HEK293T (cell line): ENCODE measurements at regions of chr1 and their contacts with region 1.

Region 1: GRCh38 chr1:160951443-160952128 is 3.0 kb downstream of the ITLN2 start:
- DNase-seq: peak; percentile 75

Region 2: DNA sequence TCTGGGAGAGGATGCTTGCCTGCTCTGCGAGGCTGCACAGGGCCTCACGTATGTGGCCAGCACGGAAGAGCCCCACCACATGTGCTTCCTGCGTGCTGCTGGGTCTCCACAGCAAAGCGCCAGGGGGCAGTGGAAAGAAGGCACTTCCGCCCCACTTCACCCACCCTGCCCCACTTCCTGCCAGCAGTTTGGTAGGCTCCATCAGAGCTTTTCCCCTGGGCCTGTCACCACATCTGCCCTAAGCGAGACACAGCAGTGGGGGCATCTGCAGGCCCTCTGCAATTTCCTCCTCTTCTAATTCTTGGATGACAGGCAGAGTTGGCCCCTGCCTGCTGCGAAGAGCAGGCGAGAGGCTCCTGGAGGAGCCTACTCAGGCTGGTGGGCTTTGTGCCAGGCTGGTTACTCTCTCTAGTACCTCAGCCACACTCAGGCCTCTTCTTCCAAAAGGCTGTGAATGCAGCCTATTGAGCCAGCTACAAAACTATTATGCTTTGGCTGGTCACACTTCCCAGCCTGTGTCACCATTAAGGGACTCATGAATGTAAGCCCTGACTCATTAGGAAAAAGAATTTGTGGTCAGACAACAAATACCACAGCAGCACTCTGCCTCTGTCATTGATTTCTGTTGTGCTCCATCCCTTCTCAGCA is 113.9 kb before region 1 on chr1:
- CTCF ChIA-PET with region 1: interaction called, 16 read pairs
- POLR2A ChIA-PET with region 1: no interaction called
- DNase-seq: no peak